Mammary epithelial cell (primary cell): ENCODE measurements at regions of chr7 and their contacts with region 1.

Region 1: GRCh38 chr7:137335814-137336213 is 7.7 kb downstream of the PTN start:
- DNase-seq: peak; percentile 64
- H3K4me3 ChIP-seq: no peak overlapping the region
- H3K27ac ChIP-seq: no peak overlapping the region
- H3K4me1 ChIP-seq: no peaks in the 10 kb centered on the region
- H3K27me3 ChIP-seq: no peaks in the 10 kb centered on the region
- CTCF ChIP-seq: no peak

Region 2: GRCh38 chr7:136294977-136295376 is 1040.8 kb before region 1 on chr7:
- CTCF ChIA-PET with region 1: interaction called, 22 read pairs
- dilution Hi-C with region 1: no loop called
- in situ Hi-C with region 1: no loop called
- intact Hi-C with region 1: no loop called
- DNase-seq: no peak
- H3K4me3 ChIP-seq: no peak overlapping the region
- H3K27ac ChIP-seq: no peak overlapping the region
- H3K4me1 ChIP-seq: no peaks in the 10 kb centered on the region
- H3K27me3 ChIP-seq: no peaks in the 10 kb centered on the region
- CTCF ChIP-seq: no peak

Region 3: DNA sequence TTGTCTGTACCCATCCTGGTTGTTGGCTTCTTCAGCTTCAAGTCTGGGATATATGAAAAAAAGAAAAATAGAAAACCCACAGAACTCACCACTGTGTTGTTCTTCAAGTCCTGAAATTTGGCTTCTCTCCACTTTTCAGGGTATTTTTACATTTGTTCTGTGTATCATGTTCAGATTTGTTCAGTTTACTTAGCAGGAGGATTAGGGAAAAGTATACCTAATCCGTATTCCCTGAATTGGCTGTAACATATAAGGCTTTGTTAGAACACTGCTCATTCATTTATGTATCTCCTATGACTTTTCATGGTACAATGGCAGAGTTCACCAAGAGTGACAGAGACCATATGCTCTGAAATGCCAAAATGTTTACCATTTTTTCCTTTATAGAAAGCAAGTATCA is 139.2 kb before region 1 on chr7:
- CTCF ChIA-PET with region 1: no interaction called
- dilution Hi-C with region 1: no loop called
- in situ Hi-C with region 1: no loop called
- intact Hi-C with region 1: no loop called
- DNase-seq: no peak
- H3K4me3 ChIP-seq: no peak overlapping the region
- H3K27ac ChIP-seq: no peak overlapping the region
- H3K4me1 ChIP-seq: no peaks in the 10 kb centered on the region
- H3K27me3 ChIP-seq: no peaks in the 10 kb centered on the region
- CTCF ChIP-seq: no peak